ENCODE measurements at regions of chr7 and their contacts with region 1.

Region 1: DNA sequence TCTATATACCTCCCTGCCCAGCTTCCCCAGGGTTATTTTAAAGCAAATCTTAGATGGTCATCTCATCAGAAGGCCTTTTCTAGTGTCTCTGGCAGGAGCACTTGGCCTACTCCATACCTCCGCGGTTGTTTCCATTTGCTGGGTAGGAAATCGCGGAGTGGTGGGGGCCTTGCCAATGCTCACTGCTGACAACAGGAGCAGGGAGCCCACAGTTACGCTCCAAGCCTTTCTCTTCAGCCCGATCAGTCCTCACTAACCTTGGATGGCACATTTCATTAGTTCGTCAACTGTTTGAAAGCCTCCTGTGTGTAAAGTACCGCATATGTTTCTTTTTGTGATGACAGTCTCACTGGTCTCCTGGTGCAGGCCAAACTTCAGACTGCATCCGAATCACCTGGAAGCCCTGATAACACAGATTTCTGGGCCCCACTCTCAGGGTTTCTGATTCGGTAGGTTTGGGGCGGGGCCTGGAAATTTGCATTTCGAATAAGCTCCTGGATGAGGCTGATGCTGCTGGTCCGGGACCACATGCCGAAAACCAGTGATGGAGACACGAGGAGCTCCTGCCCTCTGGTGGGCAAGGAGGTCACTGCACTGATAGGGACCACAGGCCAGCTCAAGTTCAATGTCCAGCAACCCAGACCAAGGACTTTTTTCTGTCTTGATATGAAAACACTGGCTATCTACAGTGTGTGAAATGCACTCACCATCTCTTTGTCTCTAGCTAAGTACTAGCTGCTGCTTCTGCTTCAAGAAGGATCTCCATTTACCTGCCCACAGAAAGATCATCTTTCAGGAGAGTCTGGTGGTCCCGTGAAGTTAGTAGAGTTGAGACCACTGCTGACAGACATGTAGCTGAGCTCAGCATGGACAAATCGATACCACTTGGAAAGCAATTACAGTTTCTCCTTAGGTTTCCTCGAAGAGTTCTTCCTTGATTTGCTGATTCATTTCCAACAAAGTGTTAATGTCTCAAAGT is 14.0 kb downstream of the LRGUK start:
- DNase-seq: peak; percentile 77 to 93
- ATAC-seq: peak; percentile 97 to 98
- H3K4me3 ChIP-seq: no peak overlapping the region
- H3K27ac ChIP-seq: no peak overlapping the region
- H3K4me1 ChIP-seq: peaks cover 4% of the 10 kb centered on the region; the same call in 2 of the 3 replicates
- CTCF ChIP-seq: peak; percentile 92
- EP300 ChIP-seq: no peak
- POLR2A ChIP-seq: no peak
- RAD21 ChIP-seq: peak; percentile 89 to 90

Region 2: GRCh38 chr7:134075799-134076198 is 65.4 kb before region 1 on chr7:
- CTCF ChIA-PET with region 1: no interaction called
- POLR2A ChIA-PET with region 1: no interaction called
- DNase-seq: no peak
- ATAC-seq: no peak
- H3K4me3 ChIP-seq: no peak overlapping the region
- H3K27ac ChIP-seq: no peak overlapping the region
- H3K4me1 ChIP-seq: no peaks in the 10 kb centered on the region
- CTCF ChIP-seq: no peak
- EP300 ChIP-seq: no peak
- POLR2A ChIP-seq: no peak
- RAD21 ChIP-seq: no peak

Region 3: GRCh38 chr7:134108813-134109212 is 32.4 kb before region 1 on chr7:
- CTCF ChIA-PET with region 1: interaction called, 12 read pairs
- POLR2A ChIA-PET with region 1: no interaction called
- DNase-seq: peak in 1 of 2 experiments; percentile 18
- ATAC-seq: peak; percentile 52 to 56; a peak in 4 of 6 replicates
- H3K4me3 ChIP-seq: no peak overlapping the region
- H3K27ac ChIP-seq: no peak overlapping the region
- H3K4me1 ChIP-seq: no peaks in the 10 kb centered on the region
- CTCF ChIP-seq: peak; percentile 32; the same call in 1 of the 3 replicates
- EP300 ChIP-seq: no peak
- POLR2A ChIP-seq: no peak
- RAD21 ChIP-seq: peak; percentile 27 to 39; a peak in 2 of 5 replicates

Region 4: DNA sequence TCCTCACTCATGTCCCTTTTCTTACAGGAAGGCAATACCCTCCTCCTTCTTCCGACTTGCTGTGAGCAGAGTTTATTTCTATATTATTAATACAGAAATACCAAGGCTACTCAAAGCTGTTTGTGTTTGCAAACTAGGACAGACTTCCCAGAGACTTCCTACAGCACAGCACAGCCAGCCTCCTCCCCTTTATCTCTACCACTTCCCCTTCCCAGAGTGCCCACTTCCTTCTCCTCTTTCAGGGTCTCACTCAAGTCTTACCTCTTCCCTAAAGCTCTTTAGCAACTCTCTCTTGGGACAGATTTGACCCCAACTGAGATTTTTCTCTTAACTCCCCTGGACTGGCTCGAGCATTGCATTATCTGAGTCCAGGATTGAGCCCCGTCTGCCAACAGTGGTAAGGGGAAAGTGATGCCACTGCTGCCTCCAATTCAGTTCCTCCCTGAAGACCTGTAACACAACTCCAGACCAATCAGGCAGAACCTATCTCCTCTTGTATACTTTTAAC is 19.5 kb before region 1 on chr7:
- CTCF ChIA-PET with region 1: interaction called, 26 read pairs
- POLR2A ChIA-PET with region 1: no interaction called
- DNase-seq: no peak
- ATAC-seq: no peak; a peak in 1 of 6 replicates
- H3K4me3 ChIP-seq: no peak overlapping the region
- H3K27ac ChIP-seq: no peak overlapping the region
- H3K4me1 ChIP-seq: 0 out of 3 replicates have a peak, but pooled peaks cover 2% of the 10 kb centered on the region
- CTCF ChIP-seq: no peak
- EP300 ChIP-seq: no peak
- POLR2A ChIP-seq: no peak
- RAD21 ChIP-seq: no peak

Region 5: DNA sequence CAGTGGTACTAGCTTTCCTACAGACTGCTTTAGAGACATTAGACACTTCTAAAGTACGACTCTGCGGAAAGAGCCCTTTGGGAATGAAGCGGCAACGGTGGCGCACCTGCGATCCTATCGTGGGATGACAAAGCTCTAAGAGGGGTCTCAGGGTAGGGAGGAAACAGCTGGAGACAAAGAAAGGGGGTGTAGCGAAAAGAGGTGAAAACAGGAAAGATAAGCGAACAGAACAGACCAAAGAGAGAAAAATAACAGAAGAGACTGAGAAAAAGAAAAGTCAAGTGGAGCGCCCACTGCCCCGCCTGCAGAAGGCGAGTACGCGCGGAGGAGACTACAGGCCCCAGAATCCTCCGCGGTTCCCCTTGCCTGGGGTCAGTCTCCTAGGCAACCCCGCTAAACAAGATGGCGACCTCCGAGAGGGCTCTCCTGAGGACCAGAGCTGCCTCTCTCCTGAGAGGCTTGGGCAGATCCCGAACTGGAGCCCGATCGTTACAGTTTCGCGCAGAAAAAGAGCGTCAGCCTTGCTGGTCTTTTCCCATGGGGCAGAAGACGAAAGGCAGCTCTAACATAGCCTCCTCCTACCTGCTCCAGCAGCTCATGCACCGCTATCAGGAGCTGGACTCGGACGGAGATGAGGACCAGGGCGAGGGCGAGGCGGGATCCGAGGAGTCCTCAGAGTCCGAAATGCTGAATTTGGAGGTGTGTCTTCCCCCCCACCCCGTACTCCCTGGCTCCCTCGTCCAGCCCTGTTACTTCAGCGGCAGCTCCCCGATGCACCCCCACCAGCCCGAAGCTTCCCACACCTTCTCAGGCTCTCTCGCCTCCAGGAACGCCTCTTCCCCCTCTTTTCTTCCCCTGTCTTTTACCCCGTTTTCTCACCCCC is 14.0 kb before region 1 on chr7 and contains the start of gene LRGUK:
- CTCF ChIA-PET with region 1: interaction called, 26 read pairs
- POLR2A ChIA-PET with region 1: no interaction called
- DNase-seq: peak; percentile 81 to 93
- ATAC-seq: peak; percentile 99 to 100
- H3K4me3 ChIP-seq: peak within 1 kb of the TSS; percentile 71
- H3K27ac ChIP-seq: peak within 1 kb of the TSS; percentile 13 to 49; a peak in 3 of 6 replicates
- H3K4me1 ChIP-seq: peaks cover 8% of the 10 kb centered on the region; the same call in 1 of the 3 replicates
- CTCF ChIP-seq: no peak
- EP300 ChIP-seq: no peak
- POLR2A ChIP-seq: no peak
- RAD21 ChIP-seq: no peak
- polyA plus RNA-seq, gene LRGUK: 0.32 and 0.71 TPM in 2 replicates

Region 6: DNA sequence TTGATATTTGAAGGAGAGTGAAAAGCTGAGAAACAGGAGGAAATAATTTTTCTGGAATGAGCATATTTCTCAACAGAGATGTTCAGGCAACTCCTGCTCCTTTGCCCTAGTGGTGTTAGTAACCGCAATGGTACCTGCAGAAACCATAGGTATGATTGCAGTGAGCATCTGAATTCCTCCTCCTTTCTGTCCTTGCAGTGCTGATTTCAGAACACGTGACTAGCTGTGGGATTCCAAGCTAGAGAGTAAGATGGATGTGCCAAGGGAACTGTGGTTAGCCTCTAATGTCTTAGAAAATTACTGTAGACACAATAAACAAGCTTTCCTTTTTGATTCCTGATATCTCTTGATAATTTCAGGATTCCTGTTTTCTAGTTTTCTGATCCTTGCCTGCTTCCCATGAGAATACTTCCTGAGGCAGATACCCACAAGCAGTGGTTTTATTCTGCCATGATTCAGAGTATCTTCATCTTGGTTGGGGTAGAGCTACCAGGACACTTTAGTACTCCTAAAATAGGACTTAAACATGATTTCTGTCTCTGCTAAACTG is 13.5 kb after region 1 on chr7:
- CTCF ChIA-PET with region 1: interaction called, 41 read pairs
- POLR2A ChIA-PET with region 1: no interaction called
- DNase-seq: no peak
- ATAC-seq: 0 out of 6 replicates have a peak, but pooled peaks of 1 of the 2 experiments have one; percentile 34
- H3K4me3 ChIP-seq: no peak overlapping the region
- H3K27ac ChIP-seq: no peak overlapping the region
- H3K4me1 ChIP-seq: no peaks in the 10 kb centered on the region; the same call in 2 of the 3 replicates
- CTCF ChIP-seq: no peak
- EP300 ChIP-seq: no peak
- POLR2A ChIP-seq: no peak
- RAD21 ChIP-seq: no peak

Region 7: DNA sequence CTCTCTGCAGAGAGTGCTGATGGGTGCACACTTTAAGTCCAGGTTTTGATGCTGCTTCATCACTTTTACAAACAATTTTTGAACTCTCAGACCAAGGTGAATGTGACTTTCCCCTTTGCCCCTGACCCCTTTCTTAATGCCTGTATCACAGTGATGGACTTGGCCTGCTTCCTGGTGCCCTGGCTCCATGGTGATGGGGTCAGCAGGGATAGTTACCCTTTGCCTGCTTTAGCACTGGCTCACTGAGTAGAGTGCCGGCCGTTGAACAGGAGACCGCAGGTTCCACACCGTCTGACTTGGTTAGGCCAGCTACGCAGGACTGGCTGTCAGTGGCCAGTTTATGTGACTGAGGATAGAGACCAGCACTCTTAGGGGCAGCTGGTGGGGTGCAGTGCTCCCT is 26.1 kb after region 1 on chr7:
- CTCF ChIA-PET with region 1: interaction called, 16 read pairs
- POLR2A ChIA-PET with region 1: no interaction called
- DNase-seq: no peak
- ATAC-seq: no peak
- H3K4me3 ChIP-seq: no peak overlapping the region
- H3K27ac ChIP-seq: no peak overlapping the region
- H3K4me1 ChIP-seq: no peaks in the 10 kb centered on the region
- CTCF ChIP-seq: no peak
- EP300 ChIP-seq: no peak
- POLR2A ChIP-seq: no peak
- RAD21 ChIP-seq: no peak

Region 8: DNA sequence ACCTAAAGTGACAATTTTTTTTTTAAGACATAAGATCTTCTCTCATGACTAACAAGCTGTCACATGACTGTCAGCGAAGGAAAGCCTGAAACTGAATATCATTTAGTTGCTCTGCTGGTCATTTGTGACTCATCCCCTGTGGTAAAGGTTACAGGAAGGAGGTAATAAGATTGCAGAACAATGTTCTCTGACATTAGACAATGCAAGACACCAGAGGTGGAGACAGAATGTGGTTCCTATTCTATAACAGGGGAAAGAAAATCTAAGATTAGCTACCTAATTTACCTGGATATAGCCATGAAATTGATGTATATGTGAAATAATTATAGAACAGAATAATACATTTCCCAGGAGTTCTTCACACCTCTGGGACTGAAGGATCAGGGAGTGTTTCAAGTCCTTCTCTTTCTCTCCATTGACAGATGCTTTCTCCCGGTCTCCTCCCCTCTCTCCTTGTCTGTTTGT is 33.7 kb after region 1 on chr7:
- CTCF ChIA-PET with region 1: interaction called, 10 read pairs
- POLR2A ChIA-PET with region 1: no interaction called
- DNase-seq: peak; percentile 83 to 94
- ATAC-seq: peak; percentile 95 to 98
- H3K4me3 ChIP-seq: no peak overlapping the region
- H3K27ac ChIP-seq: peak overlapping the region; percentile 33 to 61; a peak in 5 of 6 replicates
- H3K4me1 ChIP-seq: peaks cover 15% of the 10 kb centered on the region
- CTCF ChIP-seq: no peak
- EP300 ChIP-seq: no peak; a peak in 1 of 5 replicates
- POLR2A ChIP-seq: no peak
- RAD21 ChIP-seq: no peak

Measured in A549 (cell line).